ENCODE measurements at regions of chr9 and their contacts with region 1.

Region 1: DNA sequence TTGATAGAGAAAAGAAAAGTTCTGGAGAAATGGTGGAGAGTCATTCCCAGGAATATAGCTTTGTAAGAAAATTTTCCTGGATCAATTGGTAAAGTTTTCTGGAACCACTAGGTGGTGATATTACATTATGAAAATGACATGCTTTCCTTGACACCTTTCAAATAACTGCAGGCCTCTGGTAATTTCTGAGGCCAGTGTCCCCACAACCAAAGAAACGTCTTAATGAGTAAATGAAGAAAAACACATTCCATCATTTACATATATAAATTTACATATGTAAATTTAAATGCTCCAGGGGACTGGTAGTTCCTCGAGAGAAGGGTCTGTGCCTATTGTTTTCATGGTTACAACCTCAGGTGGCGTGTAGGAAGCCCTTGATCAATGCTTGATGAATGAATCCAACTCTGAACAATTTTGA is 17.2 kb upstream of the RGS3 start:
- DNase-seq: no peak
- ATAC-seq: peak; percentile 55
- H3K4me3 ChIP-seq: no peak overlapping the region
- H3K4me1 ChIP-seq: no peaks in the 10 kb centered on the region
- CTCF ChIP-seq: peak; percentile 24

Region 2: DNA sequence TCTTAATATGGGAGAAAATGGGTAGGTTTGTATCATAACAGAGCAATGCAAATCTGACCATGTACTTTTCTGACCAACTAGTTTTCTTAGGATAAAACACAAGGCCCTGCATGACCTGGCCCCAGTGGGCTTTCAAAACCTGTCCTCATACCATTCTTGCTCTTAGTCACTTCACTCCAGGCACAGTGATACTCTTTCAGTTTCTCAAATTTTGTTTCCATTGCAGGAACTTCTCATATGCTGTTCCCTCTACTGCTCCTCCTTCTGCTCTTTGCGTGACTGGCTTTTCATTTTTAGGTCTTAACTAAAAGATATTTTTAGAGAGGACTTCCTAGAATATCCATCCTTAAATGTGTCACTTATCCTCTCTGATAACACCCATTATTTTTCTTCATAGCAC is 840.8 kb before region 1 on chr9:
- intact Hi-C with region 1: no loop called
- DNase-seq: no peak
- ATAC-seq: no peak
- H3K4me3 ChIP-seq: no peak overlapping the region
- H3K4me1 ChIP-seq: no peaks in the 10 kb centered on the region
- CTCF ChIP-seq: no peak

Region 3: GRCh38 chr9:113355040-113355596 is 91.2 kb before region 1 on chr9:
- intact Hi-C with region 1: no loop called
- DNase-seq: no peak
- ATAC-seq: no peak
- H3K4me3 ChIP-seq: no peak overlapping the region
- H3K4me1 ChIP-seq: peaks cover 2% of the 10 kb centered on the region
- CTCF ChIP-seq: no peak

Region 4: DNA sequence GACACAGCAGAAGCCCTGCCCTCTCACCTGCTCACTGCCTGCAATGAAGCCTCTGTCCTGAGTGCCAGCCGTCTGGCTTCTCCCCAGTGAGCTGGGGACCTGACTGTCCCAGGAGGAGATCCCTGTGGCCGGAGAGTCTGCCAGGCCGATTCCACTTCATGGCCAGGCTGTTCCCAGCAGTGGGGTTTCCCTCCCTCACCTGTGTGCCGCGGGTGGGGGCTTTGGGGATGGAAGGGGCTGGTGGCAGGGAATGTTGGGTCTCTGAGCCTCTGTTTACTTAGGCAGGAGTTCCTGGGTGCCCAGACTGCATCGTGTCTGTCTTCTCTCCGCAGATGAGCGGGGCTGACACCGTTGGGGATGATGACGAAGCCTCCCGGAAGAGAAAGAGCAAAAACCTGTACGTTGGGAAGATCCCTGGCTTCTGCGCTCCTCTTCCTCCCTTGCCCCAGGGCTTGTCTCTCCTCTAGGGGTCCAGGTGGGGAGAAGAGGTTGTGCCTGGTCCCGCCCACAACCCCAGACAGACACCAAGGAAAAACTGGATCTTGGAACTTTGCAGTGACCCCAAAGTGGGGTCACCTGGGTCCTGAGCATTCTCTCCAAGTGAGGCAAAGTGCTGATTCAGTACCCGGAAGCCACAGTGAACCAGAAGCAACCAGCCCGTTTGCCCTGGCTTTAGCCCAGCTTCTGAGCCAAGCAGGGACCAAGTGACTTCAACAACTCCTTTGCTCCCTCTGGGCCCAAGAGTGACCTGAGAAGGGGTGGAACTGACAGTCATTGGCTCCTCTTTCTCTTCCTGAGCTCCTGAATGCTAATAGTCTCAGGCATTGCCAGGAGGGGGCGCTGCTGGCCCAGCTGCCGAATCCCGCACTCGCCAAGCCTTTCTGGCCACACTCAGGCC is 144.9 kb after region 1 on chr9:
- intact Hi-C with region 1: loop called (anchors 5 kb)
- DNase-seq: peak in 2 of 3 donors; percentile 83 to 85
- ATAC-seq: peak; percentile 76
- H3K4me3 ChIP-seq: no peak overlapping the region
- H3K4me1 ChIP-seq: no peaks in the 10 kb centered on the region
- CTCF ChIP-seq: peak; percentile 67

Measured in mucosa of descending colon (tissue), 3 donors.